ENCODE measurements at regions of chr1 and their contacts with region 1.

Region 1: GRCh38 chr1:27416387-27417111 is 24.1 kb downstream of the GPR3 start:
- DNase-seq: peak; percentile 44
- H3K4me3 Mint-ChIP-seq: no peak overlapping the region
- H3K27ac Mint-ChIP-seq: no peak overlapping the region
- H3K4me1 Mint-ChIP-seq: peaks cover 47% of the 10 kb centered on the region
- H3K27me3 Mint-ChIP-seq: no peaks in the 10 kb centered on the region

Region 2: GRCh38 chr1:27430903-27431600 is 14.5 kb after region 1 on chr1:
- intact Hi-C with region 1: loop called (anchors 1 kb)
- DNase-seq: peak; percentile 29
- H3K4me3 Mint-ChIP-seq: peak overlapping the region; percentile 59
- H3K27ac Mint-ChIP-seq: peak overlapping the region; percentile 75
- H3K4me1 Mint-ChIP-seq: peaks cover 70% of the 10 kb centered on the region
- H3K27me3 Mint-ChIP-seq: no peaks in the 10 kb centered on the region

Region 3: GRCh38 chr1:27455139-27455811 is 38.7 kb after region 1 on chr1:
- intact Hi-C with region 1: loop called (anchors 1 kb)
- DNase-seq: peak; percentile 15
- H3K4me3 Mint-ChIP-seq: peak overlapping the region; percentile 4
- H3K27ac Mint-ChIP-seq: peak overlapping the region; percentile 59
- H3K4me1 Mint-ChIP-seq: peaks cover 37% of the 10 kb centered on the region
- H3K27me3 Mint-ChIP-seq: no peaks in the 10 kb centered on the region

Region 4: DNA sequence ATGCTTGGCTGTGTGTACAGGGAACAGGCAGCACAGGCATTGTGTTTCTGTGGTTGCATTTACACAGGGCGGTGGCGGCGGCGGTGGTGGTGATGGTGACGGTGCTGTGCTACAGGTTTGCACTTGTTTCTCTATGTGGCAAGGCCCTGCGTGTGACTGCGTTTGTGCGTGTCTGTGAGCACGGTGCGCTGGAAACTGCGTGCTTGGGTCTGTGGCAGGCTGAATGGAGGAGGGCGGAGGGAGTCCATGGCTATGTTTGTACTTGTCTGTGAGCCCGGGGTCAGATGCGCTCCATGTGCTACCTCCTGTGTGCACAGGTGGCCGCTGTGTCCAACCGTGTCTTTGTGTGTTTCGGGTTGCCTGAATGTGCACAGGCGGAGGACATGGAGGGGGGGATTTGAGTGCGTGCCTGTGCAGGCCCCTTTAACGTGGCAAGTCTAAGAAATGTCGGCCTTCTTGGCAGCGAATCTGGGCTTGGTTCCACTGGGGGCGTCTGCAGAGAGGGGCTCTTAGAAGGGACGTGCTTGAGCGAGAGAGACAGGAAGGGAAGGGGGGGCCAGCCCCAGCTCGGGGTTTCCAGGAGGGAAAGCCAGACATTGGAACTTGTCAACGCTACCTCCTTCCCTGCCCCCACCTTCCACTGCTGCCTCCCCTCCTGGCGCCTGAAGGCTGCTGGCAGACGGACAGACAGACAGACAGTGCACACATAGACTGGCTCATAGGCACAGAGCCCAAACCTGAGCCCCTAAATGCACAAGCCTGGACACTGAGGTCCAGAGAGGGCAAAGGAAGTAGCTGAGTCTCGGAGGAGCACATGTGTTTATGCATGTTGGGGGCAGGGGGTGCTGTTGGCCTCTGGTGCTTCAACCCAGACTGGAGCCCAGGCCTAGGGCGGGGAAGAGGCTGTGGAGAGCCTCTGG is 106.1 kb after region 1 on chr1:
- intact Hi-C with region 1: loop called (anchors 1 kb)
- DNase-seq: peak; percentile 59
- H3K4me3 Mint-ChIP-seq: peak overlapping the region; percentile 90
- H3K27ac Mint-ChIP-seq: peak overlapping the region; percentile 97
- H3K4me1 Mint-ChIP-seq: peaks cover 79% of the 10 kb centered on the region
- H3K27me3 Mint-ChIP-seq: no peaks in the 10 kb centered on the region

Measured in activated T-helper 1 cell treated with anti-CD3 and anti-CD28 coated beads, Interleukin-12 subunit alpha, Interleukin-12 subunit beta, Interleukin-2, Interleukin-4 antibody, amounts not matched to agents 30 ng/mL and 10 ng/mL and 1 ng/mL, durations not matched to agents 14 hours and 24 hours and 36 hours (primary cell).